SK-N-SH (cell line): ENCODE measurements at regions of chr17 and their contacts with region 1.

Region 1: DNA sequence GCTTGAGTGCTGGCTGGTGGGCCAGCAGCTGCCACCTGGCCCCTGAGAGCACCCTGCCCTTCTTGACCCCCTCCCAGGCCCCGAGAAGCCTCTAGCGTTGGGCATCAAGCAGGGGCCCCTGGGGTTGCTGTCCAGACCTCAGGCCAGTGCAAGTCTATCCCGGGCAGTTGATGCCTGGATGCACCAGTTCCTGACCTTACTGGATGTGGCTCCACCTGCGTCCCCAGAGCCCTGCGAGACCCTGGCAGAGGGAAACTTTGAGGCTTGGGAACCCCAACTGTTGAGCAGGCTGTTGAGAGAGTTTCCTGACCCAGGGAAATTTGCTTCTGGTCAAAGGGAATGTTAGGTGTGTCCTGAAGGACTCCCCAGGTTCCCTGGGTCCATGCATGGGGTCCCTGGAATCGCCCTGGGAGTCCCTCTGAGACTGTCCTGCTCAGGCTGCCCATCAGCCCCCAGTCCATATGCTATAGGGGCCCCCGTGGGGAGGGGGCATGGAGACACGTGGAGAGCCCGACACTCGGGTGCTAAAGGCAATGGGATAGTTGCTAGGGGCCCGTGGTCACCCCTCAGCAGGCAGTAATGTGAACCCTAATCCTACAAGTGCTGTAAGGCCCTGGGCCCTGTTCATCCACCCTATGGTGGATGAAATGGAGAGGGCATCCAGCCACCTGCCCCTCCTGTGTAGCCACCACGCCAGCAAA is 46.4 kb downstream of the RAB11FIP4 start:
- DNase-seq: no peak
- H3K4me3 ChIP-seq: no peak overlapping the region
- H3K27ac ChIP-seq: no peak overlapping the region
- H3K4me1 ChIP-seq: no peaks in the 10 kb centered on the region; a peak in 1 of 4 replicates
- H3K27me3 ChIP-seq: no peaks in the 10 kb centered on the region
- CTCF ChIP-seq: no peak
- EP300 ChIP-seq: no peak
- RAD21 ChIP-seq: no peak

Region 2: GRCh38 chr17:31318298-31318801 is 119.5 kb before region 1 on chr17:
- CTCF ChIA-PET with region 1: no interaction called
- POLR2A ChIA-PET with region 1: no interaction called
- DNase-seq: no peak
- H3K4me3 ChIP-seq: no peak overlapping the region
- H3K27ac ChIP-seq: no peak overlapping the region
- H3K4me1 ChIP-seq: peaks cover 5 to 8% of the 10 kb centered on the region in 2 experiments
- H3K27me3 ChIP-seq: no peaks in the 10 kb centered on the region
- CTCF ChIP-seq: no peak
- EP300 ChIP-seq: no peak
- RAD21 ChIP-seq: no peak

Region 3: GRCh38 chr17:31448467-31449077 is 10.7 kb after region 1 on chr17:
- CTCF ChIA-PET with region 1: interaction called, 21 read pairs
- POLR2A ChIA-PET with region 1: no interaction called
- DNase-seq: no peak
- H3K4me3 ChIP-seq: no peak overlapping the region
- H3K27ac ChIP-seq: no peak overlapping the region
- H3K4me1 ChIP-seq: peaks cover 0 to 8% of the 10 kb centered on the region in 2 experiments; a peak in 2 of 4 replicates
- H3K27me3 ChIP-seq: no peaks in the 10 kb centered on the region
- CTCF ChIP-seq: no peak
- EP300 ChIP-seq: no peak
- RAD21 ChIP-seq: no peak

Region 4: DNA sequence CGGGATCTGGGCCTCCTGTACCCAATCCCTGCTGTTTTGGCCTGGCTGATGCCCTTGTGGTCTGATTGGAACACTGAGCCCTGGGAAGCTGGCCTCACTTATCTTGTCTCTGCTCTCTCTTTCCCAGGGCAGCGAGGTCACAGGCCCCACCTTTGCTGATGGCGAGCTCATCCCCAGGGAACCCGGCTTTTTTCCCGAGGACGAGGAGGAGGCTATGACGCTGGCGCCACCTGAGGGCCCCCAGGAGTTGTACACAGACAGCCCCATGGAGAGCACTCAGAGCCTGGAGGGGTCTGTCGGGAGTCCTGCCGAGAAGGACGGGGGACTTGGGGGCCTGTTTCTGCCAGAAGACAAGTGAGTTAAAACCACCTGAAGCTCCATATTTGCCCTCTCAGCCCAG is 79.7 kb after region 1 on chr17:
- CTCF ChIA-PET with region 1: interaction called, 31 read pairs
- POLR2A ChIA-PET with region 1: no interaction called
- DNase-seq: peak; percentile 80
- H3K4me3 ChIP-seq: no peak overlapping the region
- H3K27ac ChIP-seq: no peak overlapping the region; a peak in 1 of 4 replicates
- H3K4me1 ChIP-seq: peaks cover 0 to 27% of the 10 kb centered on the region in 2 experiments; a peak in 1 of 4 replicates
- H3K27me3 ChIP-seq: no peaks in the 10 kb centered on the region
- CTCF ChIP-seq: peak; percentile 41
- EP300 ChIP-seq: no peak
- RAD21 ChIP-seq: peak; percentile 79